PC-9 (cell line): ENCODE measurements at regions of chr1 and their contacts with region 1.

Region 1: GRCh38 chr1:156129706-156130581 is 15.4 kb downstream of the LMNA start:
- DNase-seq: peak; percentile 94 to 98
- H3K4me3 ChIP-seq: peak overlapping the region; percentile 20; the same call in 1 of the 2 replicates
- H3K27ac ChIP-seq: peak overlapping the region; percentile 98
- H3K4me1 ChIP-seq: peaks cover 56% of the 10 kb centered on the region
- H3K27me3 ChIP-seq: no peaks in the 10 kb centered on the region
- CTCF ChIP-seq: peak; percentile 99

Region 2: DNA sequence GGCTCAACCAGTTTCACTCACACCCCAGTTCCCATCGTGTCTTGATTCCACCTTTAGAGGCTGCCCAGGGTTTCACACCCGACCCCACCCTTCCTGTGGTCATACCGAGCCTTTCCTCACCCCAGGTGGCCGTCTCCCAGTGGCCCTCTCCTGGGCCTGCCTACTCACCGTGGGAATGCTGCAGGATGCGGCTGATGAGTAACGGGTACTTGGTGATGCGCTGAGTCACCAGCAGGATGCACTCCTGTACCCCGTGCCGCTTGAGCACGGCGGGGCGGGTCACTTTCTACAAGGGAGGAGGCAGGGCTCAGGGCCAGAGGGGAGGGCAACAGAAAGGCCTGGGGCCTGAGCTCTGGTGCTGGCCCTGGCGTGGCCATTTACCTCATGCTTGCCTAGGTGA is 168.0 kb before region 1 on chr1:
- CTCF ChIA-PET with region 1: no interaction called
- POLR2A ChIA-PET with region 1: no interaction called
- intact Hi-C with region 1: loop called (anchors 1 kb)
- DNase-seq: peak; percentile 98 to 99
- H3K4me3 ChIP-seq: no peak overlapping the region
- H3K27ac ChIP-seq: peak overlapping the region; percentile 99
- H3K4me1 ChIP-seq: peaks cover 38% of the 10 kb centered on the region
- H3K27me3 ChIP-seq: no peaks in the 10 kb centered on the region
- CTCF ChIP-seq: no peak; the same call in 1 of the 2 replicates

Region 3: DNA sequence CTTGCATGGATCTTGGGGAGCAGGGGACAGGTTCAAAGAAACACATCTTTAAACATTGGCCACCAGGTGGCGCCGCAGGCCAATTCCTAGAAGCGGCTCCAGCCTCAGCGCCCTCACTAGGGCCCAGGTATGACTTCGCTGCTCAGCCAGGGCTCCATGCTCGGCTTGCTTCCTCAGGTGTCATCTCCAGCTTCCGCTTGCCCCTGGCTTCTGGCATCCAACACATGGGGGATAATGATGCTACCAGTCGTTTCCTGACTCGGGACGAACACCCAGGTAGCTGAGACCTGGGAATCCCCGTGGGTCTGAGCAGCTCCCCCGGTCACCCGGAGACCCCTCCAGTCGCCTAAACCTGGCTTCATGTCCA is 39.1 kb before region 1 on chr1:
- CTCF ChIA-PET with region 1: interaction called, 31 read pairs
- POLR2A ChIA-PET with region 1: no interaction called
- intact Hi-C with region 1: loop called (anchors 1 kb)
- DNase-seq: peak; percentile 81 to 84
- H3K4me3 ChIP-seq: no peak overlapping the region
- H3K27ac ChIP-seq: no peak overlapping the region
- H3K4me1 ChIP-seq: peaks cover 31% of the 10 kb centered on the region
- H3K27me3 ChIP-seq: no peaks in the 10 kb centered on the region
- CTCF ChIP-seq: peak; percentile 92

Region 4: GRCh38 chr1:156096640-156097391 is 33.1 kb before region 1 on chr1:
- CTCF ChIA-PET with region 1: interaction called, 31 read pairs
- POLR2A ChIA-PET with region 1: interaction called, 6 read pairs
- intact Hi-C with region 1: loop called (anchors 1 kb)
- DNase-seq: peak; percentile 68 to 88
- H3K4me3 ChIP-seq: no peak overlapping the region
- H3K27ac ChIP-seq: peak overlapping the region; percentile 13; the same call in 1 of the 2 replicates
- H3K4me1 ChIP-seq: peaks cover 48% of the 10 kb centered on the region
- H3K27me3 ChIP-seq: no peaks in the 10 kb centered on the region
- CTCF ChIP-seq: peak; percentile 95

Region 5: DNA sequence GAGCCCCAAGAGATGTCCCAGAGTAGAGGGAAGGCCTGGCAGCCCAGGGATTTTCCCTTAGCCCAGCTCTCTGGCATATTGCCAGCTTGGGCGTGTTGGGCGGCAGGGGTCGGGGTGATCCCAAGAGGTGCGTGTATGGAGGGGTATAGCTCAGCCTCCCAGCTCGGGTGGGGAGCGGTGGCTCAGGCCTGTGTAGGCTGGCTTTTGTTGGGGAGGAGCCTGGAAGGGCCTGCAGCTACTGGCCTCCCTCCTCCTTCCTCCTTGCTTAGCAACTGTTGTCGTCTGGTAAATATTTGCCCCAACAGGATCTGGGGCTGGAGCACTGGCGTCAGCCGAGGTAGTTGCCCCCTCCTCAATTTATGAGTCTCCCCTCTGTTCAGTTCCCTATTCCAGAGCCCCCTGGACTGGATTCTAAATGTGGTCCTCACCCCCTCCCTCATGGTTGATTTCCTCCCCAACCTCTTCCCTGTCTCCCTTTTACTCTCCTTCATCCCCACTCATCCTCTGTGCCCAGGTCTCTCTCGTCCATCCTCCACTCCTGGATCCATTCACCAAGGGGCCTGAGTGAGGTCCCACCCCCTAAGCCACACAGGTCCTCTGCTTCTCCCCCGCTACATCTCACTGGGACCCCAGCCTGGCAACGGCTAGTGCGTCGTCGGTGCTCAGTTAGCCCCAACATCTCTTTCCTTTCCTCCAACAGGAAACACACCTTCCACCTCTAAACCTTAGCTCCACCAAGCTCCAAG is 25.7 kb before region 1 on chr1:
- CTCF ChIA-PET with region 1: interaction called, 7 read pairs
- POLR2A ChIA-PET with region 1: interaction called, 11 read pairs
- intact Hi-C with region 1: loop called (anchors 1 kb)
- DNase-seq: peak; percentile 70 to 85
- H3K4me3 ChIP-seq: no peak overlapping the region
- H3K27ac ChIP-seq: no peak overlapping the region
- H3K4me1 ChIP-seq: peaks cover 95% of the 10 kb centered on the region
- H3K27me3 ChIP-seq: no peaks in the 10 kb centered on the region
- CTCF ChIP-seq: no peak

Region 6: DNA sequence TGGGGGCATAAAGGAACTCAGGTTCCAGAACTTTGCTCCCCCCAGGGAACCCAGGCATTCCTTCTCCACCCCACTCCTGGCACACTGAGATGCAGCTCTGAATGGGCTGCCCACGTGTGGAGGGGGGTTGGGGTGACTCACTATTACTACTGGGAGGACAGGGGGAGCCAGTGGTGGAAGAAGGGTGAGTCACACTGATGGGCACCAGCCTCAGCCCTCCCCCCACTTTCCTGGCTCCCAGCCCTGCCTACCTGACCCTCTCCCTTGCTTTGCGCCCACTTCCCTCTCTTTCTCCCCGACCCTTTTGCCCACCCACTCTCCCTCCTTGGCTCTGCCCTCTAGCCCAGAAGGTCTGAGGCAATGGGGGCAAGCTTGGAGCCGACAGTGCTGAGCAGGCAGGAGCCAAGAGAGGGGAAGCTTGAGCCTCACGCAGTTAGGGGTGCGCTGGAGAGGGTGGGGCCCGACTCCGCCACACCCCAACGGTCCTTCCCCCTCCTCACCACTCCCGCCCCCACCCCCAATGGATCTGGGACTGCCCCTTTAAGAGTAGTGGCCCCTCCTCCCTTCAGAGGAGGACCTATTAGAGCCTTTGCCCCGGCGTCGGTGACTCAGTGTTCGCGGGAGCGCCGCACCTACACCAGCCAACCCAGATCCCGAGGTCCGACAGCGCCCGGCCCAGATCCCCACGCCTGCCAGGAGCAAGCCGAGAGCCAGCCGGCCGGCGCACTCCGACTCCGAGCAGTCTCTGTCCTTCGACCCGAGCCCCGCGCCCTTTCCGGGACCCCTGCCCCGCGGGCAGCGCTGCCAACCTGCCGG is 15.6 kb before region 1 on chr1 and contains the start of gene LMNA:
- CTCF ChIA-PET with region 1: interaction called, 11 read pairs
- POLR2A ChIA-PET with region 1: interaction called, 21 read pairs
- intact Hi-C with region 1: loop called (anchors 2 kb)
- DNase-seq: peak; percentile 90 to 94
- H3K4me3 ChIP-seq: peak within 1 kb of the TSS; percentile 100
- H3K27ac ChIP-seq: peak within 1 kb of the TSS; percentile 69
- H3K4me1 ChIP-seq: peaks cover 65% of the 10 kb centered on the region
- H3K27me3 ChIP-seq: no peaks in the 10 kb centered on the region
- CTCF ChIP-seq: no peak
- total RNA-seq, gene LMNA: 569 and 580 TPM in 2 replicates